ENCODE measurements at regions of chr1 and their contacts with region 1.

Region 1: GRCh38 chr1:111507411-111508201 is 4.2 kb upstream of the ADORA3 start:
- DNase-seq: peak; percentile 19 to 79 (median 64)
- ATAC-seq: peak; percentile 62
- H3K4me3 ChIP-seq: peak overlapping the region; percentile 38 to 58
- H3K4me3 Mint-ChIP-seq: peak overlapping the region; percentile 78
- H3K27ac ChIP-seq: peak overlapping the region; percentile 55 to 90
- H3K27ac Mint-ChIP-seq: peak overlapping the region; percentile 95
- H3K4me1 ChIP-seq: peaks cover 88% of the 10 kb centered on the region
- H3K4me1 Mint-ChIP-seq: peaks cover 52% of the 10 kb centered on the region
- H3K27me3 ChIP-seq: no peaks in the 10 kb centered on the region
- H3K27me3 Mint-ChIP-seq: no peaks in the 10 kb centered on the region
- CTCF ChIP-seq: no peak

Region 2: GRCh38 chr1:111281411-111281810 is 226.2 kb before region 1 on chr1:
- CTCF ChIA-PET with region 1: no interaction called
- POLR2A ChIA-PET with region 1: no interaction called
- intact Hi-C with region 1: no loop called
- DNase-seq: no peak
- ATAC-seq: no peak
- H3K4me3 ChIP-seq: no peak overlapping the region
- H3K4me3 Mint-ChIP-seq: no peak overlapping the region
- H3K27ac ChIP-seq: no peak overlapping the region
- H3K27ac Mint-ChIP-seq: no peak overlapping the region
- H3K4me1 ChIP-seq: no peaks in the 10 kb centered on the region
- H3K4me1 Mint-ChIP-seq: no peaks in the 10 kb centered on the region
- H3K27me3 ChIP-seq: no peaks in the 10 kb centered on the region
- H3K27me3 Mint-ChIP-seq: no peaks in the 10 kb centered on the region
- CTCF ChIP-seq: no peak

Region 3: GRCh38 chr1:111481387-111482221 is 26.0 kb before region 1 on chr1:
- CTCF ChIA-PET with region 1: interaction called, 52 read pairs
- POLR2A ChIA-PET with region 1: interaction called, 16 read pairs
- intact Hi-C with region 1: loop called in 1 of 2 experiments (anchors 2 kb)
- DNase-seq: peak in 8 of 9 experiments; percentile 46 to 78 (median 56)
- ATAC-seq: peak; percentile 41
- H3K4me3 ChIP-seq: no peak overlapping the region
- H3K4me3 Mint-ChIP-seq: no peak overlapping the region
- H3K27ac ChIP-seq: no peak overlapping the region
- H3K27ac Mint-ChIP-seq: no peak overlapping the region
- H3K4me1 ChIP-seq: peaks cover 22% of the 10 kb centered on the region
- H3K4me1 Mint-ChIP-seq: peaks cover 40% of the 10 kb centered on the region
- H3K27me3 ChIP-seq: no peaks in the 10 kb centered on the region
- H3K27me3 Mint-ChIP-seq: no peaks in the 10 kb centered on the region
- CTCF ChIP-seq: no peak

Region 4: DNA sequence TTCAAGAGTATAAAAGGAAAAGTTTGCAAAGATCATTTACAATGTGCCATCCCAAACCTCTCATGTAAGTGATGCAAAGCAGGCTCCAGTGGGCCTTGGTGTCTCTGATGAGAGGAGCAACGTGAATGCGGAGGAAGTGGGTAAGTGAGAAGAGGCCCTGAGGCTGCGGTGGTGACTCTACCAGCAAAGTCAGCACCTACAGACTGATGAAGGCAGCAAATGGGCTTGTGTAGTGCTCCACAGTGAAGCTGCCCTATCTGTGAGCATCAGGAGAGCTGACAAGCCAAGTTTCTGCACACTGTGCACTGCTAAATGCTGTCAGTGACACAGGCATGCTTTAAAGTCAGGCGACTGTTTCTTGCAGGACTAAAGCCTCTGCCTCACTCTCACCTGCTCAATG is 96.4 kb after region 1 on chr1:
- CTCF ChIA-PET with region 1: interaction called, 27 read pairs
- POLR2A ChIA-PET with region 1: interaction called, 7 read pairs
- intact Hi-C with region 1: no loop called
- DNase-seq: peak; percentile 57 to 91 (median 81)
- ATAC-seq: peak; percentile 96
- H3K4me3 ChIP-seq: no peak overlapping the region
- H3K4me3 Mint-ChIP-seq: peak overlapping the region; percentile 52
- H3K27ac ChIP-seq: peak overlapping the region; percentile 13 to 67
- H3K27ac Mint-ChIP-seq: peak overlapping the region; percentile 89
- H3K4me1 ChIP-seq: peaks cover 51% of the 10 kb centered on the region
- H3K4me1 Mint-ChIP-seq: peaks cover 72% of the 10 kb centered on the region
- H3K27me3 ChIP-seq: no peaks in the 10 kb centered on the region
- H3K27me3 Mint-ChIP-seq: no peaks in the 10 kb centered on the region
- CTCF ChIP-seq: no peak

Region 5: DNA sequence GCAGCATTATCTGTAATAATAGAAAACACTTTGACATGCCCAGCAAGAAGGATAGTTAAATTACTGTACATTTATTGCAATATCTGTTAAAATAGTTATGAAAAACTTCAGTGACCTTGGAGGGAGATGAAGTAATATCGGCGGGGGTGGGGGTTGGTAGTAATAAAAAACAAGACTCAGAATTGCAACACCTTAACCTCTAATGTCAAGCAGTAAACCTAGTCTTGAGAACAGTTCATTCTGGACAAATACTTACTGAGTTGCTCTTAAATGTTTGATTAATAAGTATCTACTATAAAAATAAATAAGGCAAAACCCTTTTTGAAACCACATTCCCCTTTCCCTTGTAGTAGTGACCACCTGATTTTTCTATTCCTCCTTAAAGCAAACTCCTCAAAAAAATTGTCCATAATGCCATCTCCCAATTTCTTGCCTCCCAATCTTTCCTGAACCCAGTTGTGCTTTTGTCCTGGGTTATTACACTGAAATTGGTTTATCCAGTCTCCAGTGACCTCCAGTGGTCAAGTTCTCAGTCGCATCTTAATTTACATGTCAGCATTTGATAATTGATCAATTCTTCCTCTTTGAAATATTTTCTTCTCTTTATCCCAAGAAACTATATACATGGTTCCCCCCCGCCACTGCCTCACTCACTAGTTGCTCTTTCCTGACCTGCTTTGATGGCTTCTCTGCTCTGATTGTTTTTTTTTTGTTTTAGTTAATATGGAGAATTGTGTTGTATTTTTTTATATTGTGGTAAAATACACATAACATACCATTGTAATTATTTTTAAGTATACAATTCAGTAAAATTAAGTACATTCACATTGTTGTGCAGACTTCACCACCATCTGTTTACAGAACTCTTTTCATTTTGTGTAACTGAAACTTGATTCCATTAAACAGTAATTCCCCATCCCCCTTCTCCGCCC is 148.7 kb after region 1 on chr1:
- CTCF ChIA-PET with region 1: interaction called, 13 read pairs
- POLR2A ChIA-PET with region 1: interaction called, 4 read pairs
- intact Hi-C with region 1: loop called (anchors 1 kb)
- DNase-seq: peak in 2 of 9 experiments; percentile 57 to 68
- ATAC-seq: no peak
- H3K4me3 ChIP-seq: no peak overlapping the region
- H3K4me3 Mint-ChIP-seq: no peak overlapping the region
- H3K27ac ChIP-seq: no peak overlapping the region
- H3K27ac Mint-ChIP-seq: peak overlapping the region; percentile 33
- H3K4me1 ChIP-seq: peaks cover 63% of the 10 kb centered on the region
- H3K4me1 Mint-ChIP-seq: peaks cover 53% of the 10 kb centered on the region
- H3K27me3 ChIP-seq: no peaks in the 10 kb centered on the region
- H3K27me3 Mint-ChIP-seq: no peaks in the 10 kb centered on the region
- CTCF ChIP-seq: peak; percentile 62

Region 6: DNA sequence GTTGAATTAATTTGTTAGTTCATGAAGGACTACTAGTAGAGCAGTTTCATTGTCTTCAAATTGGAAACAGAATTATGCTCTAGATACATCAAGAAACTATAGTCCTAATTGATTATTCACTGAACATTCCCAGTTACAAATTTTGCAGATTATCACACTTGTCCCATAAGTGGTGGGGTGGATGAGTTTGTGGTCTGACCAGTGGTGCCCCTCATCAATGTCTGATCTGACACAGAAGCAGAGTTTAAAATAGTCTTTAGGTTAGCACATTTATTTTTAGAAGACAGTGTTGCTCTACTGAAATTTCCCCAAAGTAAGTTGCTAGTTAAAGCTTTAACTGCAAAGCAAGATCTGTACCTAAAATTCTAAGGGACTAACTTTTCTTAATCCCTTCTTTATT is 188.7 kb after region 1 on chr1:
- CTCF ChIA-PET with region 1: interaction called, 23 read pairs
- POLR2A ChIA-PET with region 1: interaction called, 4 read pairs
- intact Hi-C with region 1: no loop called
- DNase-seq: no peak
- ATAC-seq: no peak
- H3K4me3 ChIP-seq: no peak overlapping the region
- H3K4me3 Mint-ChIP-seq: no peak overlapping the region
- H3K27ac ChIP-seq: peak overlapping the region in 1 of 2 experiments; percentile 20
- H3K27ac Mint-ChIP-seq: peak overlapping the region; percentile 73
- H3K4me1 ChIP-seq: no peaks in the 10 kb centered on the region
- H3K4me1 Mint-ChIP-seq: peaks cover 41% of the 10 kb centered on the region
- H3K27me3 ChIP-seq: no peaks in the 10 kb centered on the region
- H3K27me3 Mint-ChIP-seq: no peaks in the 10 kb centered on the region
- CTCF ChIP-seq: no peak

Region 7: DNA sequence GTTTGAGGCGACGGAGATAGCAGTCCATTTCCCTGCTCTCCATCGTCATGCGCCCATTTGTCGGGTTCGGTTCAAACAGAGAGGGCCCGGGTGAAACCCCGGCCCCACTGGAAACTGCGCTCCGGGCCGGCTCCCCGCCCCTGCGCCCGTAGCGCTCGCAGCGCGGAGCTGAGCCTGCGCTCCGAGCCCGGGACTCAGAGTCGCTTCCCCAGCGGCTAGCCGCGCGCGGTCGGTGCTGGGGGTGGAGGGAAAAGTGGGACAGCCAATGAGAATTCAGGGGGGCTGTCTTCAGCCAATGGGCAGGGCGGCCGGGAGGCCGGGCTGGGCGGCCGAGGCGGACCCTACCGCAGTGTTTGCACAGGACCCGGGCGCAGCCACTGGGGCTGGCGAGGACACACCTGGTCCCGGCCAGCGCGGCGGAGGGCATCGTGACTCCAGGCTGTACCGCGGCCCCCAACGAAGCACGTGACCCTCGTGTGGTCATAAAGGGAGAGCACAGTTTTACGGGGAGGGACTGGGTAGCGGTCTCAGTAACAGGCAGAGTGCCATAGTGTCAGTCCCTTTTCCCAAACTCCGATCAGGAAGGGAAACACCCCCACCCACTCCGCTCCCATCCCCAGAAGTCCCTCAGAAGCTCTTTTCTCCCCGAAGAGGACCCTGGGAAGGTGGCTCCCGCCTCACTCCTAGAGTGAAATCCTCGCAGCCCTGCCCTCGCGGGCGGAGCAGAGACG is 231.8 kb after region 1 on chr1 and contains the start of gene INKA2:
- CTCF ChIA-PET with region 1: interaction called, 5 read pairs
- POLR2A ChIA-PET with region 1: interaction called, 11 read pairs
- intact Hi-C with region 1: no loop called
- DNase-seq: peak; percentile 22 to 77 (median 65)
- ATAC-seq: peak; percentile 58
- H3K4me3 ChIP-seq: peak within 1 kb of the TSS; percentile 59 to 74
- H3K4me3 Mint-ChIP-seq: peak within 1 kb of the TSS; percentile 91
- H3K27ac ChIP-seq: no peak within 1 kb of the TSS
- H3K27ac Mint-ChIP-seq: no peak within 1 kb of the TSS
- H3K4me1 ChIP-seq: peaks cover 9% of the 10 kb centered on the region
- H3K4me1 Mint-ChIP-seq: peaks cover 21% of the 10 kb centered on the region
- H3K27me3 ChIP-seq: peaks cover 3 to 32% of the 10 kb centered on the region in 2 experiments
- H3K27me3 Mint-ChIP-seq: peaks cover 25% of the 10 kb centered on the region
- CTCF ChIP-seq: no peak
- total RNA-seq, gene INKA2: 0.36 to 0.54 TPM